Calu3 (cell line): ENCODE measurements at regions of chr1 and their contacts with region 1.

Region 1: GRCh38 chr1:167533851-167534300 is 15.5 kb upstream of the CD247 start:
- DNase-seq: peak; percentile 80
- H3K4me3 Mint-ChIP-seq: no peak overlapping the region
- H3K27ac Mint-ChIP-seq: no peak overlapping the region
- H3K4me1 Mint-ChIP-seq: peaks cover 7% of the 10 kb centered on the region
- H3K27me3 Mint-ChIP-seq: no peaks in the 10 kb centered on the region
- CTCF ChIP-seq: peak; percentile 90

Region 2: DNA sequence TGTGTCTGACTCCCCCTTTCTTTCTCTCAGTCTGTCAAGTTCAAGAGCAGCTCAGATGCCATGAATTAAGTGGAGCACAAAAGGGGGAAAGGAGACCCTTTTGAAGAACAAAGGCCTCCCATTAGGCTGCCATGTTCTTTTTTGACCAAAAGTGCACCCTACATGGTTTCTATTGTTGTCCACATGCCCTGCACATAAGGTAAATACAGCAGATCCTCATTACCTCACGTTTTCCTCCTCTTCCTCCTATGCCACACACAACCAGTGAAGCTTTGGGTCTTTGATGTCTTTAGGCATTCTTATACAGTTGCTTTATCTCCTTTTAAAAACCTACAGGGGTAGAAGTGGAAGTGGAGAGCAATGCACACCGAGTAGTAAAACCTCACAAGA is 265.5 kb before region 1 on chr1:
- CTCF ChIA-PET with region 1: interaction called, 5 read pairs
- intact Hi-C with region 1: loop called (anchors 2 kb)
- DNase-seq: no peak
- H3K4me3 Mint-ChIP-seq: no peak overlapping the region
- H3K27ac Mint-ChIP-seq: no peak overlapping the region
- H3K4me1 Mint-ChIP-seq: peaks cover 6% of the 10 kb centered on the region
- H3K27me3 Mint-ChIP-seq: no peaks in the 10 kb centered on the region
- CTCF ChIP-seq: no peak

Region 3: GRCh38 chr1:167401260-167401873 is 132.5 kb before region 1 on chr1:
- CTCF ChIA-PET with region 1: no interaction called
- intact Hi-C with region 1: loop called (anchors 2 kb)
- DNase-seq: peak; percentile 73
- H3K4me3 Mint-ChIP-seq: no peak overlapping the region
- H3K27ac Mint-ChIP-seq: no peak overlapping the region
- H3K4me1 Mint-ChIP-seq: peaks cover 7% of the 10 kb centered on the region
- H3K27me3 Mint-ChIP-seq: no peaks in the 10 kb centered on the region
- CTCF ChIP-seq: peak; percentile 49

Region 4: DNA sequence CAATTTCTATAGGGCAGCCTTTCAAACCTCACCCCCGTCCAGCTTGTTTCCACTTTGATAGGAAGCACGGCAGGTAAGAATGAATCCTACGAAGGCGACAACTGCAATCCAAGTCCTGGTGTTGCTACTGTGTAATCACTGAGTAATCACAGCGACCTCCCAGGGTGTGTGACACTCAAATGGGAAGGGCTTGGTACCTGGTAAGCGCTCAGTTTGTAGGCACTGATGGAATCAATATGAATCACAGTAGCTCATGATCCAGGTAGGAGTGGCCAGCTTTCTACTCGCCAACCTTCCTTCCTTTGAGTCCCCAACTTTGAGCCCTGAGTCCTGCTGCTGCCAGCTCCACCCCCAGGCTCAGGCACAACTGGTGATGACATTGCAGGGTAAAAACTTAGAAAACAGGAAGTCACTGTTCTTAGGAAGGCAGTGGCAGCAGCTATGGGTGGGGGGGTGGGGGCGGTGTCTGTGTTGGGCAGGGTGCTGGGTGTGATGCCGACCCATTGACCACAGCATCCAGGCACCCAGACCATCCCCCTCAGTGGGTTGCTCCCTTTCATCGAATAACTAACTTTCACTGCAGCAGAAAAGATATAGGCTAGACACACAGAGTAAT is 86.2 kb before region 1 on chr1:
- CTCF ChIA-PET with region 1: interaction called, 4 read pairs
- intact Hi-C with region 1: loop called (anchors 5 kb)
- DNase-seq: peak; percentile 81
- H3K4me3 Mint-ChIP-seq: peak overlapping the region; percentile 43
- H3K27ac Mint-ChIP-seq: peak overlapping the region; percentile 75
- H3K4me1 Mint-ChIP-seq: peaks cover 3% of the 10 kb centered on the region
- H3K27me3 Mint-ChIP-seq: no peaks in the 10 kb centered on the region
- CTCF ChIP-seq: no peak